OCI-LY7 (cell line): ENCODE measurements at regions of chr17 and their contacts with region 1.

Region 1: GRCh38 chr17:39281806-39282205 is 56.1 kb upstream of the STAC2 start:
- DNase-seq: no peak
- H3K4me3 ChIP-seq: no peak overlapping the region
- H3K27ac ChIP-seq: no peak overlapping the region
- H3K4me1 ChIP-seq: peaks cover 11% of the 10 kb centered on the region
- CTCF ChIP-seq: no peak

Region 2: GRCh38 chr17:39335704-39336223 is 54.0 kb after region 1 on chr17:
- CTCF ChIA-PET with region 1: no interaction called
- POLR2A ChIA-PET with region 1: interaction called, 12 read pairs
- intact Hi-C with region 1: no loop called
- DNase-seq: no peak
- H3K4me3 ChIP-seq: no peak overlapping the region
- H3K27ac ChIP-seq: no peak overlapping the region
- H3K4me1 ChIP-seq: peaks cover 11% of the 10 kb centered on the region
- CTCF ChIP-seq: no peak